CD8-positive, alpha-beta T cell (primary cell): ENCODE measurements at regions of chr4 and their contacts with region 1.

Region 1: DNA sequence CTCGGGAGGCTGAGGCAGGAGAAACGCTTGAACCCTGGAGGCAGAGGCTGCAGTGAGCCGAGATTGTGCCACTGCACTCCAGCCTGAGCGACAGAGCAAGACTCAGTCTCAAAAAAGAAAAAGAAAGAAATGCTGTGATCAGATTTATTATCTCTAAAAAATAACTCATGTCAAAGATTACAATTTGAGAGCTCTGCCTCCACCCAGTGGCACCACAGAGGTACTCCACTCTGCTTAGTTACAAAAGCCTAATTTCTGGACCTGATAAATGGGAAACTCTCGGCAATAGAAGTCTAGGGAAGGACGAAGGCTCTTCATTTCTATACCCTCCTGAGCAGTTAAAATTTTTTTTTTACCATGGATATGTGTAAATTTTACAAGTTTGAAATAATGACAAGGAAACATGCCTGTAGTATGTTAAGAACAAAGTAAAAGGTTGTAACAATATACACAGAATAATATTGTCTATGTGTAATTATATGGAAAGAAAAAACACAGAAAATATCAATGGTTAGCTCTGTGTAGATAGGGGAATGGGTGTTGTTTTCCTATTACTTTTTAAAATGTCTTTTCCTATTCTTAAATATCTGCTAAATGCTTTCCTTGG is 149.8 kb downstream of the STIM2 start:
- DNase-seq: peak; percentile 23 to 76 (median 64)
- ATAC-seq: peak; percentile 90
- H3K4me3 ChIP-seq: no peak overlapping the region
- H3K4me3 Mint-ChIP-seq: no peak overlapping the region
- H3K27ac ChIP-seq: no peak overlapping the region
- H3K27ac Mint-ChIP-seq: peak overlapping the region; percentile 72
- H3K4me1 ChIP-seq: no peaks in the 10 kb centered on the region
- H3K4me1 Mint-ChIP-seq: peaks cover 13% of the 10 kb centered on the region
- H3K27me3 ChIP-seq: no peaks in the 10 kb centered on the region
- H3K27me3 Mint-ChIP-seq: no peaks in the 10 kb centered on the region
- CTCF ChIP-seq: peak; percentile 98

Region 2: DNA sequence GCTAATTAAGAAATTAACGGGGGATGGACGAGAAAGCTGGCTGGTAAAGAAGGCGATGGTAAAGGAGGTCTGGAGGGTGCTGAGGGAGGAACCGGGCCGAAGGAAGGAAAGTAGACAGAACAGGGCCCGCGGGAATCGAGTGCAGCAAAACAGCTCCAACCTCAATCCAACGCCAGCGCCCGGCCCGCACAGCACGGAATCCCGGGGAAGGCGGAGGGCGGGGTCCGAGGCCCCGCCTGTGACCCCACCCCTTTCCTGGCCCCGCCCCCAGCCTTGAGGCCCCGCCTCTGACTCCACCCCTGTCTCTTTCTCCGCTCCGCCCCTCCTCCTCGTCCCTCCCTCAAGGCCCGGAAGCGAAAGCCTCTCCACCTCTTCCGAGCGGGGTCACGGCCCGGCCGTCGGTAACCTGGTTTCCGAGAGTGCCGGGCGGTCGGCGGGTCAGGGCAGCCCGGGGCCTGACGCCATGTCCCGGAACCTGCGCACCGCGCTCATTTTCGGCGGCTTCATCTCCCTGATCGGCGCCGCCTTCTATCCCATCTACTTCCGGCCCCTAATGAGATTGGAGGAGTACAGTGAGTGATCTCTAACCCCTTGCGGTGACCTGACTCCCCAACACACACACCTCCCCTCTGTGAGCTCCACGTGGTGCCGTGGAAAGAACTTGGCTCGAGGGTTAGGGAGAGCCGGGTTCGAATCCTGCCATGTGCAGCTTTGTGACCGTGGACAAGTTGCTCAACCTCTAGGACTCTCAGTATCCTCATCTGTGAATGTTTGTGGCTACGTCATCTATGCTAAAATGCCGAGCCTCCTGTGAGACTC is 1096.4 kb before region 1 on chr4 and contains the start of gene SMIM20:
- CTCF ChIA-PET with region 1: no interaction called
- POLR2A ChIA-PET with region 1: no interaction called
- intact Hi-C with region 1: loop called in 1 of 2 experiments (anchors 10 kb)
- DNase-seq: peak; percentile 81 to 95 (median 87)
- ATAC-seq: peak; percentile 94
- H3K4me3 ChIP-seq: peak within 1 kb of the TSS; percentile 72 to 78
- H3K4me3 Mint-ChIP-seq: peak within 1 kb of the TSS; percentile 97
- H3K27ac ChIP-seq: peak within 1 kb of the TSS; percentile 81 to 95
- H3K27ac Mint-ChIP-seq: peak within 1 kb of the TSS; percentile 98
- H3K4me1 ChIP-seq: peaks cover 18% of the 10 kb centered on the region
- H3K4me1 Mint-ChIP-seq: peaks cover 24% of the 10 kb centered on the region
- H3K27me3 ChIP-seq: no peaks in the 10 kb centered on the region
- H3K27me3 Mint-ChIP-seq: no peaks in the 10 kb centered on the region
- CTCF ChIP-seq: no peak
- total RNA-seq, gene SMIM20: 7.5 to 9.8 TPM

Region 3: GRCh38 chr4:26330186-26330787 is 680.1 kb before region 1 on chr4:
- CTCF ChIA-PET with region 1: interaction called, 5 read pairs
- POLR2A ChIA-PET with region 1: no interaction called
- intact Hi-C with region 1: loop called (anchors 2 to 5 kb)
- DNase-seq: peak in 3 of 9 experiments; percentile 16 to 73 (median 64)
- ATAC-seq: peak; percentile 86
- H3K4me3 ChIP-seq: no peak overlapping the region
- H3K4me3 Mint-ChIP-seq: no peak overlapping the region
- H3K27ac ChIP-seq: no peak overlapping the region
- H3K27ac Mint-ChIP-seq: no peak overlapping the region
- H3K4me1 ChIP-seq: no peaks in the 10 kb centered on the region
- H3K4me1 Mint-ChIP-seq: peaks cover 48% of the 10 kb centered on the region
- H3K27me3 ChIP-seq: no peaks in the 10 kb centered on the region
- H3K27me3 Mint-ChIP-seq: no peaks in the 10 kb centered on the region
- CTCF ChIP-seq: peak; percentile 88

Region 4: DNA sequence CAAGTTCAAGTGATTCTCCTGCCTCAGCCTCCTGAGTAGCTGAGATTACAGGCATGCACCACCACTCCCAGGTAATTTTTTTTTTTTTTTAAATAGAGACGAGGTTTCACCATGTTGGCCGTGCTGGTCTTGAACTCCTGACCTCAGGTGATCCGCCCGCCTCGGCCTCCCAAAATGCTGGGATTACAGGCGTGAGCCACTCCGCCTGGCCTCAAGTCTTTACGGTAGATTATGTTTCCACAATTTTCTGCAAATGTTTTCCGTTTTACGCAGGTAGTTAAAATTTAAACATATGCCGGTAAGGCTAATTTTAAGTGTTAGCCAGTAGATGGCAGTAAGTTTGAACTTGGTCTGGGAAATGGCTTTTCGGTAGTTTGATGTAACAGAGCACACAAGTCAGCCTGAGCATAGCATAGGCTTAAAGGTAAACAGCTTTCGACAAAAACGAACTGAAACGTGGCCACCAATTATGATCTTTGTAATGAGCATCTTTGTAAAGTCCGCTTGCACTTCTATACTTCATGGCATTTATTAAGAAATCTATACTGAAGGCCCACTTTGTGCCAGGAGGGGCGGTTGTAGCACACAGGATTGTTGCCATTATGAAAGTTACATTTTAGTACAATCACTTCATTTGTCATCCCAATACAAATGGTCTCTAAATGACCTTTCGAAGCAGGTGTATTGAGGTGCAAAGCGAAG is 551.2 kb before region 1 on chr4:
- CTCF ChIA-PET with region 1: interaction called, 16 read pairs
- POLR2A ChIA-PET with region 1: no interaction called
- intact Hi-C with region 1: loop called (anchors 1 kb)
- DNase-seq: peak in 2 of 9 experiments; percentile 43 to 59
- ATAC-seq: peak; percentile 50
- H3K4me3 ChIP-seq: no peak overlapping the region
- H3K4me3 Mint-ChIP-seq: peak overlapping the region; percentile 69
- H3K27ac ChIP-seq: no peak overlapping the region
- H3K27ac Mint-ChIP-seq: peak overlapping the region; percentile 72
- H3K4me1 ChIP-seq: peaks cover 7% of the 10 kb centered on the region
- H3K4me1 Mint-ChIP-seq: peaks cover 21% of the 10 kb centered on the region
- H3K27me3 ChIP-seq: no peaks in the 10 kb centered on the region
- H3K27me3 Mint-ChIP-seq: no peaks in the 10 kb centered on the region
- CTCF ChIP-seq: peak; percentile 53

Region 5: DNA sequence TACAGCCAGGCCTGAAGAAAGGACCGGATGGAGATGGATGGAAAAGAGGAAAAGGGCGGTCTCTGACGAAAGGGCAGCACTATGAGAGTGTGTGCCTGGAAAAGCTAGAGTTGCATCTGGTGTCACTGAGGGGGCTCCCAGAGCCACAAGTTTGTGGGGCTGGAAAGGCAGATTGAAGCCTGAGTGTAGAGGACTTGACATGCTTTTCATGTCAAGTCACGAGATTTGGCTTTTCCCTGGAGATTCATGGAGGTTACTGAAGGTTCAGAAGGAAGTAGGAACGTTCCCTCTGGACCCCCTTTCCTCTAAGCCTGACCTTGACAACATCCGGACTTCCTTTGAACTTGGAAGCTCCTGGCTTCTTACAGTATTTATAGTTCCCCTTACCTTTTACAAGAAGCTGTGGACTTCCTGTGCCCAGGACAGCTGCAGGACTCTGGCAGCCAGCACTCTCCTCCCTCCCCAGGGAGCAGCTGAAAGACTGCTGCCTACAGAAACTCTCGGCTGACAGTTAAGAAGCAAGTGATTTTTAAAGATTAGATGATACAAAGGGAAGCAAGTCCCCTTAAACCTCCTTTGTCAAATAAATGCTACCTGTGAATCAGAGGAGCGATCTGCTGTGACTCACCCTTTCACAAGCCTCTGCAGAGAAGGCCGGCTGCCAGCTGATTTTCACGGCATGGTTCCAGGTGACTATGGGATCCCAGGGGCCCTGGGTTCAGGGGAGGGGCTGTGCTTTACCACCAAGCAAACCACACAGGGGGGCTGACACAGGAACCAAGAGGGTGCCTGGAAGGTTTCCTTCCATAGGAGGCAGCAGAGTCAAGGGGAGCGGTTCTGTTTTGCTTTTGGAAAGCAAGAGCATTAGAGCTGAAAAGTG is 222.7 kb before region 1 on chr4:
- CTCF ChIA-PET with region 1: interaction called, 30 read pairs
- POLR2A ChIA-PET with region 1: no interaction called
- intact Hi-C with region 1: loop called (anchors 1 kb)
- DNase-seq: peak in 6 of 9 experiments; percentile 29 to 59 (median 41)
- ATAC-seq: peak; percentile 74
- H3K4me3 ChIP-seq: no peak overlapping the region
- H3K4me3 Mint-ChIP-seq: no peak overlapping the region
- H3K27ac ChIP-seq: no peak overlapping the region
- H3K27ac Mint-ChIP-seq: no peak overlapping the region
- H3K4me1 ChIP-seq: peaks cover 10% of the 10 kb centered on the region
- H3K4me1 Mint-ChIP-seq: peaks cover 11% of the 10 kb centered on the region
- H3K27me3 ChIP-seq: no peaks in the 10 kb centered on the region
- H3K27me3 Mint-ChIP-seq: no peaks in the 10 kb centered on the region
- CTCF ChIP-seq: peak; percentile 39